ENCODE measurements at regions of chr9 and their contacts with region 1.

Region 1: DNA sequence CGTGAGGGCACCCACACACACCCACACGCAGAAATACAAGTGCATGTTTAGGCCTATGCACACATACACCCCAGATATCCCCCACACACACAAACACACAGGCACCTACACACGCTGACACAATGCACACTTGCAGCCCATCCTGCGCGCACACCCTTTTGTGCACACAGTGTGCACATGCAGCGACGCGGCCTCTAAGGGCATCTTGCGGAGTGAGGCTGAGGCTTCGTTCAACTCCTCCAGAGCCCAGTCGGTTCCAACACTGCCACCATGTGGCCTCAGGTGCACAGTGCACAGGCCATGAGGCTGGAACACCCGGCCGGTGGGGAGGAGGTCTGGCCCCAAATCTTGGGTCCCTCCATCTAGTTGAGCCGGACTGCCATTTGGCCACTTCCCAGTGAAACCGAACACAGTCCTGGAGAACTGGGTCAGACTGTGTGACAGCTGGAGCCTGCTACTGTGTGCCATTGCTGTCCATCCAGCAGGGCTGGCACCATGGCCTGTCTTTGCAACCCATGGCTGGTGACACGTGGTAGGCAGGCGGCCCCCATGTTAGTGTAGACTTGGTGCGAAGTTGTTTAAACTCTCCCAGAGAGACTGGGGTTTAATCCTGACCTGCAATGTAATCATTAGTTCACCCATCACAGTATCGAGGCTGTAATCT is 97.7 kb upstream of the MVB12B start:
- DNase-seq: peak; percentile 66 to 86 (median 79)
- H3K4me3 ChIP-seq: no peak overlapping the region
- H3K27ac ChIP-seq: peak overlapping the region in 6 of 59 donors; percentile 12 to 62 (median 36)
- H3K27me3 ChIP-seq: peaks cover 0 to 2% (median 0%) of the 10 kb centered on the region in 45 donors
- CTCF ChIP-seq: peak; percentile 85 to 100 (median 96)

Region 2: GRCh38 chr9:125407974-125408900 is 820.7 kb before region 1 on chr9:
- intact Hi-C with region 1: loop called (anchors 2 to 5 kb)
- DNase-seq: peak; percentile 59 to 81 (median 74)
- H3K4me3 ChIP-seq: peak overlapping the region; percentile 43 to 82 (median 66)
- H3K27ac ChIP-seq: peak overlapping the region in 2 of 59 donors; percentile 31 to 53
- H3K27me3 ChIP-seq: peaks cover 0 to 10% (median 0%) of the 10 kb centered on the region in 45 donors
- CTCF ChIP-seq: peak; percentile 45 to 98 (median 89)

Region 3: DNA sequence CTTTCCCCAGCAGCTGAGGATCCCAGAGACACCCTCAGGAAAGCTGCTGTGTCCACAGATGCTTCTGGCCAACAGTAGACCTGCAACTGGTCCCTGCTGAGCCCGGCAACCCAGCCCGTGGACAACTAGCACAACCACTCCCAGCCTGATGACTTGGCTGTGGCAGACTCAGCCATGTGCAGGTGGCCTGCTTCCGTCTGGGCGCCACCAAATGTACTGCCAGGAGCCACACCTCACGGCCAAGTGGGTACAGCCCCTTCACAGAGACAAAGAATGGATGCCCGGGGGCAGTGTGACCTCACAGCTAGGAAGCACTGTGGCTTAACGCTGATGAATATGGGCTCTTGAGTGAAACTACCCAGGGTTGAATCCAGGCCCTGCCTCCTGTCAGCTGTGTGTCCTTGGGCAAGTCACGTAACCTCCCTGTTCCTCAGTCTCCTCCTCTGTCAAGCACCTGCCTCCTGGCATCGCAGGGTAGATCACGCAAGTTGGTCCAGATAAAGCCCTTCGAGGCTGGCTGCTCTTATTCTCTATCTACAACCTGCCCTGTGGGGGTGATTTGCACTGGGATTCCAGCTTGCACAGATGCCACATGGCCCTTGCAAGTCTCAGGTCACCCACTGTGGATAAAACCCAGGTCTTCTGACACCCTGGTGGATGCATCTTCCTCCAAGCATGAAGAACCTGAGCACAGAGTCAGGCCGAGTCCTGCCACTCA is 256.7 kb before region 1 on chr9:
- intact Hi-C with region 1: loop called in 1 of 2 experiments (anchors 10 kb)
- DNase-seq: no peak
- H3K4me3 ChIP-seq: no peak overlapping the region
- H3K27ac ChIP-seq: no peak overlapping the region
- H3K27me3 ChIP-seq: no peaks in the 10 kb centered on the region
- CTCF ChIP-seq: no peak

Region 4: GRCh38 chr9:126275386-126276001 is 46.6 kb after region 1 on chr9:
- intact Hi-C with region 1: loop called (anchors 5 kb)
- DNase-seq: peak; percentile 21 to 92 (median 86)
- H3K4me3 ChIP-seq: peak overlapping the region in 5 of 59 donors; percentile 8 to 37 (median 20)
- H3K27ac ChIP-seq: peak overlapping the region; percentile 43 to 99 (median 94)
- H3K27me3 ChIP-seq: peaks cover 0 to 2% (median 0%) of the 10 kb centered on the region in 45 donors
- CTCF ChIP-seq: peak in 8 of 56 donors; percentile 5 to 26 (median 18)

Region 5: GRCh38 chr9:126283799-126284465 is 55.0 kb after region 1 on chr9:
- intact Hi-C with region 1: loop called (anchors 5 kb)
- DNase-seq: no peak
- H3K4me3 ChIP-seq: no peak overlapping the region
- H3K27ac ChIP-seq: no peak overlapping the region
- H3K27me3 ChIP-seq: no peaks in the 10 kb centered on the region
- CTCF ChIP-seq: no peak

Region 6: DNA sequence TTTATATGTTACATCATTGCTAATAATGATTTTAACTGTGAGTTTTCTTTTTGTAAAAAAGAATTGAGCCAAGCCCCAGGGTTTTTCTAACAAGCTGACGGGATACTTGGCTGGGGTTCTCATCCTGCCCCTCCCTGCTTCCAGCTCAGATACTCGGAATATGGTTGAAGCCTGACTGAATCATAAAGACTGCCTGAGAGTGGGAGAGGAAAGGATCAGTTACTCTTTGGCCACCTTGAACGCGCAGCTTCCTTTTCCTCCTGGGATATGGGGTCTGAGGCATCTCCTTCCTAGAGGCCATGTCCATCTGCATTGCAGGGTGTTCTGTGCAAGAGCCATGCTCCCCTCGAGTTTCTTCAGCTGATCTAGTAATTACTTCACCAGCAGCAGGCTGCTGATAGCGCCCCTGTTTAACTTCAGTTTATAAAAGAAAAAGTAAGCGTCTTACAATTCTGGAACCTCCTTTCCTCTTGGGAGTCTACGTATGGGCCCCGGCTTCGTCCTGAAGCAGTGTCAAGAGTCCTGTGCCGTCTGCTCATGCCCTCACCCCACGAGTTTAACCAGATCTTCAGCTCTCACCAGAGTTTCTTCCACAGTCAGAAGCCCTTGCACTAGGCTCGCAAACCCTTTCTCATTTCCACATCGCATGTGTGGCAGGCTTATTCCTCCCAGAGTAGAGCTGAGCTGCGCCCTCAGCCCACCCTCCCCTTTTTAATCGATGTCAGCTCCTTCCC is 227.7 kb after region 1 on chr9:
- intact Hi-C with region 1: no loop called
- DNase-seq: peak in 1 of 10 donors; percentile 16
- H3K4me3 ChIP-seq: no peak overlapping the region
- H3K27ac ChIP-seq: peak overlapping the region in 8 of 59 donors; percentile 7 to 88 (median 24)
- H3K27me3 ChIP-seq: no peaks in the 10 kb centered on the region
- CTCF ChIP-seq: no peak

Measured in dorsolateral prefrontal cortex (tissue), 120 donors.